ENCODE measurements at regions of chr4 and their contacts with region 1.

Region 1: GRCh38 chr4:8176547-8177399 is 18.2 kb upstream of the ABLIM2 start:
- DNase-seq: peak; percentile 33
- ATAC-seq: peak; percentile 80
- H3K4me3 Mint-ChIP-seq: no peak overlapping the region
- H3K27ac Mint-ChIP-seq: no peak overlapping the region
- H3K4me1 Mint-ChIP-seq: peaks cover 18% of the 10 kb centered on the region
- H3K27me3 Mint-ChIP-seq: no peaks in the 10 kb centered on the region
- CTCF ChIP-seq: peak; percentile 43

Region 2: DNA sequence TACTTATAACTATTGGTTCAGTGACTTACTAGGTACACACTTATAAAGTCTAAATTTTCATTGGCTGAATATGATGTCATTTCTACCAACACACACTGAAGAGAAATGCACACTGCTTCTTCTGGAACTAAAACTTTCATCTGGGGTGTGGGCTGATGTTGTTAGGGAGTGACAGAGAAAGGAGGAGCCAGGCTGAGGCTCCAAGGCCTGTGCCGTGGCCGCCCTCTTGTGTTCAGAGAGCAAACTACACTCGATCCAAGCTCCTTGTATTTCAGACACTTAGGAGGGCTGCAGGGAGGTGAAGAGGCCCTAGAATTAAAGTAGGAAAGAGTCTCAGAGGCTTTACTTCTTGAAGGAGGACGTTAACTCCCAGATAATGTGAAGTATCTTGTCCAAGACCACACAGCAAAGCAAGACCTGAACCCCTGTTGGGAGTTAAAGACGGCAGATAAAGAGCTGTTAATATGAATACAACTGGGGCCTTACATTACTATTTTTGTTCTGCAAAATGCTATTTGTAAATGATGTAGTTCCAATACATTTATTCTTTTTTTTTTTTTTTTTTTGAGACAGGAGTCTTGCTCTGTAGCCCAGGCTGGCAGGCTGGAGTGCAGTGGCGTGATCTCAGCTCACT is 374.6 kb before region 1 on chr4:
- CTCF ChIA-PET with region 1: interaction called, 3 read pairs
- POLR2A ChIA-PET with region 1: no interaction called
- intact Hi-C with region 1: loop called (anchors 5 kb)
- DNase-seq: no peak
- ATAC-seq: peak; percentile 85
- H3K4me3 Mint-ChIP-seq: no peak overlapping the region
- H3K27ac Mint-ChIP-seq: no peak overlapping the region
- H3K4me1 Mint-ChIP-seq: no peaks in the 10 kb centered on the region
- H3K27me3 Mint-ChIP-seq: peaks cover 20% of the 10 kb centered on the region
- CTCF ChIP-seq: no peak

Region 3: DNA sequence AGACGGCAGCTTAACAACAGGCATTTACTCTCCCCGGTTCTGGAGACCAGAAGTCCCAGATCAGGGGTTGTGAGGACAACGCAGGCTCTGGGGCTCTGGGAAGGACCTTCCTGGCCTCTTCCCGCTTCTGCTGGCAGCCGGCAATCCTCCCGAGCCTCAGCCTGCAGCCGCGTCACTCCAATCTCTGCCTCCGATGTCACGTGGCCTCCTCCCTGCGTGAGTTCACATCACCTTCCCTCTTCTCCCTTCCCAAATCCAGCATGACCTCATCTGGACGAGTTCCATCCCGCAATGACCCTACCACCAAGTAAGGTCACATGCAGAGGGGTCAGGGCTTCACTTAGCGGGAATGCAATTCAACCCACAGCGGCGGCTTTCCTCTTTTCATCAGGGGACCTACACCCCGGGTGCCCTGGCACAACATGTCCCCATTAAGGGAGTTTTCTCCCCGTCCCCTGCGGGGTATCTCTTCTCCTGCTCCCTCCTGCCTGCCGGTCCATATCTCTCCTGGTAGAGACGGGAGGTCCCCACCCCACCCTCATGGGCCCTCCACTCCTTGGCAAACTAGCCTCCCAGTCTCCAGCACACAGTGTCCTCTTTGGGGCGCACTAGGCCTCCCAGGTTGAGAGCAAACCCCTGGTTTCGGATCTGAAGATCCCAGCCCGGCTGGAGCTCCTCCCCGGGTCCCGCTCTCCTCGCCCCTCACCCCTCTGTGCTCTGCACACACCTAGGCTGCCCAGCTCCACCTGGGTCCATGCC is 43.6 kb before region 1 on chr4:
- CTCF ChIA-PET with region 1: no interaction called
- POLR2A ChIA-PET with region 1: no interaction called
- intact Hi-C with region 1: no loop called
- DNase-seq: no peak
- ATAC-seq: no peak
- H3K4me3 Mint-ChIP-seq: no peak overlapping the region
- H3K27ac Mint-ChIP-seq: no peak overlapping the region
- H3K4me1 Mint-ChIP-seq: peaks cover 4% of the 10 kb centered on the region
- H3K27me3 Mint-ChIP-seq: peaks cover 18% of the 10 kb centered on the region
- CTCF ChIP-seq: no peak

Region 4: GRCh38 chr4:8158710-8159536 is 17.9 kb before region 1 on chr4 and contains the start of gene ABLIM2:
- CTCF ChIA-PET with region 1: interaction called, 10 read pairs
- POLR2A ChIA-PET with region 1: interaction called, 59 read pairs
- intact Hi-C with region 1: loop called (anchors 1 kb)
- DNase-seq: peak; percentile 100
- ATAC-seq: peak; percentile 95
- H3K4me3 Mint-ChIP-seq: peak within 1 kb of the TSS; percentile 93
- H3K27ac Mint-ChIP-seq: peak within 1 kb of the TSS; percentile 83
- H3K4me1 Mint-ChIP-seq: peaks cover 52% of the 10 kb centered on the region
- H3K27me3 Mint-ChIP-seq: peaks cover 8% of the 10 kb centered on the region
- CTCF ChIP-seq: no peak
- total RNA-seq, gene ABLIM2: 5.2 and 7.0 TPM in 2 replicates

Region 5: GRCh38 chr4:8198906-8199593 is 22.3 kb after region 1 on chr4 and contains the start of gene SH3TC1:
- CTCF ChIA-PET with region 1: interaction called, 61 read pairs
- POLR2A ChIA-PET with region 1: interaction called, 25 read pairs
- intact Hi-C with region 1: loop called (anchors 1 kb)
- DNase-seq: peak; percentile 78
- ATAC-seq: peak; percentile 67
- H3K4me3 Mint-ChIP-seq: peak within 1 kb of the TSS; percentile 97
- H3K27ac Mint-ChIP-seq: peak within 1 kb of the TSS; percentile 96
- H3K4me1 Mint-ChIP-seq: peaks cover 63% of the 10 kb centered on the region
- H3K27me3 Mint-ChIP-seq: no peaks in the 10 kb centered on the region
- CTCF ChIP-seq: no peak
- total RNA-seq, gene SH3TC1: 104 and 135 TPM in 2 replicates

Region 6: DNA sequence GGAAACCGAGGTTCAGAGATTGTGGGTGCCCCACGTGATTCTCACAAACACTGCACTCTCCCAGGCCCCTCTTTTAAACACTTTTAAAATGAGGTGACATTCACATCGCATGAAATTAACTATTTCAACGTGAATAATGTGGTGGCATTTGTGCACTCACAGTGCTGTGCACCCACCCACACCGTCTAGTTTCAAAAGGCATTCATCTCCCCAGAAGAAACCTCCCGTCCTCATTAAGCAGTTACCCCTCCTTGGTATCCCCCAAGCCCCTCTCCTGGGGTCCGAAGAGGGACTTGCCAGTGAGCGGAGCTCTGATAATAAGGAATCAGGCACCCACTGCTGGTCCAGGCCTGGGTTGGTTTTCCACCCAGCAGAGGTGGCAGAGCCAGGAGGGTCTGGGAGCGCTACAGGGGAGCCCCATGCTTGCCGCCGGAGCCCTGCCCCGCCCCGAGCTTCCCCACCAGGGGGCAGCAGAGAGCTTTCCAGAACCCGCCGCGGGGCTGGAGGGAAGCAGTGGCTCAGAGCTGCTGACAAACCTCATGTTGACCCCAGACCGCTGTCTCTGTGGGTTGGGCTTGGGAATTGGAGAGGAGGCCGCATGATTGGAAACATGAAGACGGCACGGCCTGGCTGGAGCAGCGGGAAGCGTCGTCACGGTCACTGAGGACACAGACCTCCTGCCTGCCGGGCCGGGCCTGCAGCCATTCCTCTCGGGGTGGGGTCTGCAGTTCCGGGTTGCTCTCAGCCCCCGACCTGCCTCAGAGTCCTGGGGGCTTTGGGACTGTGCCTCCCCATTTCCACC is 65.3 kb after region 1 on chr4:
- CTCF ChIA-PET with region 1: interaction called, 17 read pairs
- POLR2A ChIA-PET with region 1: interaction called, 5 read pairs
- intact Hi-C with region 1: loop called (anchors 1 kb)
- DNase-seq: peak; percentile 85
- ATAC-seq: peak; percentile 74
- H3K4me3 Mint-ChIP-seq: no peak overlapping the region
- H3K27ac Mint-ChIP-seq: no peak overlapping the region
- H3K4me1 Mint-ChIP-seq: peaks cover 21% of the 10 kb centered on the region
- H3K27me3 Mint-ChIP-seq: no peaks in the 10 kb centered on the region
- CTCF ChIP-seq: peak; percentile 83

Measured in activated B cell treated with CpG ODN at 0.5 μM for 24 hours (primary cell).